AG04449 (cell line): ENCODE measurements at regions of chr15 and their contacts with region 1.

Region 1: DNA sequence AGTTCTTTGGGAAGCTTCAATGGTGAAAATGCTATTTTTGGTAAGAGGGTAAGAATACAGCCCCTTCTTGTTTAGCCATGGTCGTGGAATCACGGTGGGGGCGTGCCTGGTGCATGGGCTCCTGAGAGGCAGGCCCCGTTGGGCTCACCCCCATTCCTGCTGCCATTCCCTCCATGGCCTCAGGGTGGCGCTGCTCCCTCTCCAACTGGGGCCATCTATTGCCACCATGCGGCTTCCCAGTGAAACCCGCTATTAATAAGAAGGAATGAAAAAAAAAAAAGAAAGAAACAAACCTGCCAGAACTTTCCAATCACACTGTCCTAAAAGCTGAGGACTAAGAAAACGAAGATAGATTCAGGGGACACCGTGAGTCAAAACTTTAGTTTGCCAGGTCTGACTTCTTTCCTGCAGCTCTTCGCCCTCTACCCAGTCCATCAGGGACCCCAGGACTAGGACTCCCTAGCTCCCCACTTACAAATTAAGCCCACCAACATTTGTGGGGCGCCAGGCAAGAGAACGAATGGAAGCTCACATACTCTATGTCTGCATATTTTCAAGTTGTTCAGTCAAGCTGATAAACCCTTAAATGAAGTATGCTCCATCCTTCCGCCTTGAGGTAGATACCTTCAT is 30.6 kb upstream of the ABHD2 start:
- DNase-seq: no peak
- H3K4me3 ChIP-seq: no peak overlapping the region
- CTCF ChIP-seq: peak; percentile 98

Region 2: GRCh38 chr15:89041507-89041906 is 16.1 kb before region 1 on chr15:
- CTCF ChIA-PET with region 1: interaction called, 10 read pairs
- POLR2A ChIA-PET with region 1: no interaction called
- DNase-seq: no peak
- H3K4me3 ChIP-seq: no peak overlapping the region
- CTCF ChIP-seq: no peak

Region 3: DNA sequence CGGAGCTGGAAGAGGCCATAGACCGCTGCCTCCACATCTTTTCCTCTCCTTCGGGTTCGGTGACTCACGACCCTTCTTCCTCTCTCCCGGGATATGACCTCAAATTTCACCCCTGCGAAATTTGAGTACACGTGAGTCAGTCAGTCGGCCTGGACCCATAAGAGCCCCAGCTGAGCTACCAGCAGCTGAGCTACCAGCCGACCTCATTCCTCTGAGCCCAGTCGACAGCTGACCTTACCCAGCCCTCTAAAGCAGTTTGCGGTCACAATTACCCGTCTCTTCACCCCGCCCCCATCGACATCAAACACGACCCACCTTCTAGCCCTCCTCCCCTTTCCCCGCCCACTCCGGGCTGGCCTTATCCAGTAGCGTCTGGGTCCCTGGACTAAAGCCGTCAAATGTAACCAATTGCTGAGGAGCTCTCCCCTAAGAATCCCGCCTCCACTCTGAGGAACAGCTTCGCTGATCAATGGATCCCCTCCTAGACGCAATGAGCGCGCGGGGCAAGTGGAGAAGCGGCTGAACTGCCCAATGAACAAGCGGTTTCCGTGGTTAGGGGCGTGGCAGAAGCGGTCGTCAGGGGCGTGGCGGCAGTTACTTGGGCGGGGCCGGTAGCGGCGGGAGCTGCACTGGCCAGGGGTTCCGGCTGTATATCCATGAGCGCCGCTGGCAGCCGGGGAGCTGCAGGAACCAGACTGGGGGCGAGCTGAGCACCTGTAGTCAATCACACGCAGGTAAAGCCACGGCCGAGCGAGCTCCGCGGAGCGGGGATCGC is 30.4 kb after region 1 on chr15 and contains the start of gene ABHD2:
- CTCF ChIA-PET with region 1: interaction called, 27 read pairs
- POLR2A ChIA-PET with region 1: interaction called, 3 read pairs
- DNase-seq: peak; percentile 100
- H3K4me3 ChIP-seq: peak within 1 kb of the TSS; percentile 82
- CTCF ChIP-seq: no peak

Region 4: DNA sequence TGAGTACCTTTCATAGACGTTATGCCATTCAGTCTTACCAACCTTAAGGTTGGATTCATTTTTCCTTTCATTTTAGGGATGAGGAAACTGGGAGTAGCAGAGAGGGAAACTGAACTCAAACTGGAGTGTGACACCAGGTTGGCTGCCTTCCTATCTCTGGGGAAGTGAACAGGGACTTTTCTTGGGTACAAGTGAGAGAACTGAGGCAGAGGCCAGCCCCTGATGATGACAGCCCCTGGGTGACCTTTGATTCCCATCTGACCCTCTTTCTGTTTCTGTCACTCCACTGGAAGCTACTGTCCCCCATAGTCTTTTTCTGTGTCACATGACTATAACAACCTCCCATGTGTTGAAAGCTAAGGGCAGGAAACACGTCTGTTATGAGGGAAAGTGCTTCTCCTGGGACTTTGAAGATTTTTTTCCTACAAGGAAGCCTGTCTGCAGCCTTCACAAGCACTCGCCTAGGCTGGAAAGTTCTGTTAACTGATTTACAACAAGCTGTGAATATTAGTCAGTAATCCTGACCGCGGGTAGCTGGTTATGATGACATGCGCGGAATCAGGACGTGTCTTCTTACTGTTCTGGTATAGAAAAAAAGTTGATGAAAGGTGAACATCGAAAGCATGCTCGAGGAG is 62.0 kb after region 1 on chr15:
- CTCF ChIA-PET with region 1: interaction called, 22 read pairs
- POLR2A ChIA-PET with region 1: no interaction called
- DNase-seq: no peak
- H3K4me3 ChIP-seq: no peak overlapping the region
- CTCF ChIP-seq: no peak

Region 5: DNA sequence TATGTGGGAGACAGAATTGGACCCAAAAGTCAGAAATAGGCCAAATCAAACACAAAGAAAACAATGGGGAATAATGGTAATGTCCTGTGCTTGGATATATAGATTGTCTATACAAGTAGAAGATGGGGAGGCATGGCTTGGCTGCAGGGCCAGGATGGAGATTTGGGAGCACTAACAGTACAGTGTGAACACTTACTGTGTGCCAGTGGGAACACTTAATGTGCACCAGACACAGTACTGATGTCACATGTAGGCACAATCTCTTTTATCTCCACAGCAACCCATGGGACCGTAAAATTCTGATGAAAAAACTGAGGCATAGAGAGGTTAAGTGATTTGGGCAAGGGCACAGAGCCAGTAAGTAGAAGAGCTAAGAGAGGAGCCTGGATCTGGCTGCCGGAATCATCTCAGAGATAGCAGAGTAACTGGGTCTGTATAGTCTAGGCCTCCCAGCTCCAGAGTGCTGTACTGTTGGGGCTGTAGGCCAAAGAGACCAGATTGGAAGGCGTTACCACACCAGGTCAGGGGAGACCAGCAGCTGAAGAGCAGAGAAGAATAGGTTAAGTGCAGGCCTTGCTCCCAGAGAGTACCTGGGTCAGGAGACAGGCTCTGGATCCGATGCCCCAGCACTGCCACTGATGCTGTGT is 100.4 kb after region 1 on chr15:
- CTCF ChIA-PET with region 1: interaction called, 677 read pairs
- POLR2A ChIA-PET with region 1: no interaction called
- DNase-seq: no peak
- H3K4me3 ChIP-seq: no peak overlapping the region
- CTCF ChIP-seq: no peak

Region 6: DNA sequence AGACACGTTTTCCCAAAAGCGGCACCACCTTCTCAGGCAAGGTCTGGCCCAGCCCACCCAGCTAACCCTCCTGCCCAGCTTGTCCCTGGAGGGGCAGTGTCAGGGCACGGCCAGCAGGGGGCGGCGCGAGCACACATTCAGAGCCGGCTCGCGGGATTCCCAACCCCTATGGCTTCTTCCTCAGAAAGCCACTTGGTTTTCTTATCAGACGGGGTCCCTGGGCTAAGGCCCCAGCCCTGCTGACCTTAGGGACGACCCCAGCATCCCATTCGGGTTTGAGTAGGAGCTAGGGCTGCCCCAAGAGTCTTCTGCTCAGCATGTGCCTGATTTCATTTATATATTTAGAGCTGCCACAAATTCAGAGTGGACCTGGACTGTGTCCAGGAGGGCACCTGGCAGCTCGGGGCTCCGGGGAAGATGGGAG is 149.3 kb after region 1 on chr15:
- CTCF ChIA-PET with region 1: interaction called, 15 read pairs
- POLR2A ChIA-PET with region 1: no interaction called
- DNase-seq: no peak
- H3K4me3 ChIP-seq: peak overlapping the region; percentile 12; the same call in 1 of the 2 replicates
- CTCF ChIP-seq: peak; percentile 99

Region 7: GRCh38 chr15:89282631-89283030 is 225.0 kb after region 1 on chr15:
- CTCF ChIA-PET with region 1: no interaction called
- POLR2A ChIA-PET with region 1: no interaction called
- DNase-seq: no peak
- H3K4me3 ChIP-seq: no peak overlapping the region
- CTCF ChIP-seq: no peak

Region 8: GRCh38 chr15:89514596-89515406 is 457.2 kb after region 1 on chr15:
- CTCF ChIA-PET with region 1: no interaction called
- POLR2A ChIA-PET with region 1: no interaction called
- DNase-seq: no peak
- H3K4me3 ChIP-seq: no peak overlapping the region
- CTCF ChIP-seq: no peak